ENCODE measurements at regions of chr6 and their contacts with region 1.

Region 1: DNA sequence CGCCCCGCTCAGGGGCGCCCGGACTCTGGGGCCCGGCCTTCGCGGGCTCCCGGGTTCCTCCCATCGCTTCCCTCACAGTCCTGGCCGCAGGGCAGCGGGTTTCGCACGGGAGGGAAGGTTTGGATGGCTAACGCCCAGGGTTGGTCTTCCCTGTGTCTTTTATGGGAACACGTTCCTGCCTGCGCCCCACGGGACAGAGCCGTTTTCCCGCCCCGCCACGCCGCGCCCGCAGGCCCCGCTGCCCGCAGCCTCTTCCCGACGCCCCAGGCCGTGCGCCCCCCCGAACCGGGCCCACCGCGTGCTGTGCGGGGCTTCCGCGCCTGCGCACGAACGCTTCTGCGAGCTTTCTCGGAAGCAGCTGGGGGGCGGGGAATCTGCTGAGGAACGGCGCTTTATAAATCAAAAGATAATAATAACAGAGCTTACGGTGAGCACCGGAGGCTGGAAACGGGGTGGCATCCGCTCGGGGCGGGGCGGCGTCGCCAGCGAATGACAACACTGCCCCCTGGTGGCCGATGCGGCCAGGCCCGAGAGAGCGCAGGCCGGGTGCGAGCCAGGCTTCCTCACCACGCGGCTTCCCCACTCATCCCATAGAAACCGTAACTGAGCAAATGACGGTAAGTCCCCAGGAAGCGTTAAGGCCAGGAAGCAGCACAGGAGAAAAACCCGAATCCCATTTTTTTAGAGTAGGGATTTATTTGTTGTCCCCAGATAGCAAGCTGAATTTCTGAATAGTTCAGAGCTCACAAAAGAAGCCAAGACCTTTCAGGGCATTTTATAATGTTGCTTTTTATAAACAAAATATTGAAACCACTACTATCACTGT is 116.4 kb downstream of the MYLK4 start:
- DNase-seq: peak; percentile 84
- H3K4me3 Mint-ChIP-seq: peak overlapping the region; percentile 66
- H3K27ac Mint-ChIP-seq: no peak overlapping the region
- H3K4me1 Mint-ChIP-seq: peaks cover 8% of the 10 kb centered on the region
- H3K27me3 Mint-ChIP-seq: peaks cover 36% of the 10 kb centered on the region

Region 2: GRCh38 chr6:946546-946945 is 1687.8 kb before region 1 on chr6:
- CTCF ChIA-PET with region 1: no interaction called
- POLR2A ChIA-PET with region 1: no interaction called
- DNase-seq: no peak
- H3K4me3 Mint-ChIP-seq: no peak overlapping the region
- H3K27ac Mint-ChIP-seq: no peak overlapping the region
- H3K4me1 Mint-ChIP-seq: no peaks in the 10 kb centered on the region
- H3K27me3 Mint-ChIP-seq: peaks cover 11% of the 10 kb centered on the region

Region 3: GRCh38 chr6:1596088-1596852 is 1038.1 kb before region 1 on chr6:
- CTCF ChIA-PET with region 1: interaction called, 42 read pairs
- POLR2A ChIA-PET with region 1: no interaction called
- DNase-seq: peak; percentile 66
- H3K4me3 Mint-ChIP-seq: no peak overlapping the region
- H3K27ac Mint-ChIP-seq: no peak overlapping the region
- H3K4me1 Mint-ChIP-seq: peaks cover 3% of the 10 kb centered on the region
- H3K27me3 Mint-ChIP-seq: peaks cover 62% of the 10 kb centered on the region

Region 4: DNA sequence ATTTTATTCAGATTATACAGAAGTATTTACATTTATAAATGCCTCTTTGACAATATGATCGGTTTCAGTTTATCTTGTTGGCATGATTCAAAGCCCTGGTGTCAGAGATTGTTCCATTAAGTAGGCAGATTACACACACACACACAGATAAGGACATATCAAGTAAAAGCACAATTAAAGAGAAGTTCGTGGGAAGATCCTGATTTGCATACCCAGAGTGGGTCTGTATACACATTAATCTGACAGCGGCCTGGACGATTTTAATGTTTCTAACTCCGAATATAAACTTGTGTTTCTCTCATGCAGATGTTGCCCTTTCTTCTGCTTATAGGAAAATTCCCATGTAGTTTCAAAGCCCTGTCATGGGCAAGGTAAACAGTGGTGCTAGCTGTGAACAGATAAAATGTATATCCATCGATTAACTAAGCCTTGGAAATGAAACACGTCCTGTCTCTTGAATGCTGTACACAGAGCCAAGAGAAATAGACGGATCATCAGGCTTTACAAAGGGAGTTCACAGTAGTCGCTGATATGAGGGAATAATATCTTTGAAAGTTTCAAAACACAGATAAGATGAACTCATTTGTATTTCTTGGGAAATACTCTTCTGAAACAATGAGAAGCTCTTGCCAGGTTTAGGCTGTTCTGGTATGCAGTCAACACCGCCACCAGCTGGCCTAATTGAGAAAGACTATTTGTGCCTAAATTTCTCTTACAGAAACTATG is 280.8 kb before region 1 on chr6:
- CTCF ChIA-PET with region 1: interaction called, 20 read pairs
- POLR2A ChIA-PET with region 1: no interaction called
- DNase-seq: peak; percentile 62
- H3K4me3 Mint-ChIP-seq: no peak overlapping the region
- H3K27ac Mint-ChIP-seq: no peak overlapping the region
- H3K4me1 Mint-ChIP-seq: no peaks in the 10 kb centered on the region
- H3K27me3 Mint-ChIP-seq: peaks cover 2% of the 10 kb centered on the region

Region 5: DNA sequence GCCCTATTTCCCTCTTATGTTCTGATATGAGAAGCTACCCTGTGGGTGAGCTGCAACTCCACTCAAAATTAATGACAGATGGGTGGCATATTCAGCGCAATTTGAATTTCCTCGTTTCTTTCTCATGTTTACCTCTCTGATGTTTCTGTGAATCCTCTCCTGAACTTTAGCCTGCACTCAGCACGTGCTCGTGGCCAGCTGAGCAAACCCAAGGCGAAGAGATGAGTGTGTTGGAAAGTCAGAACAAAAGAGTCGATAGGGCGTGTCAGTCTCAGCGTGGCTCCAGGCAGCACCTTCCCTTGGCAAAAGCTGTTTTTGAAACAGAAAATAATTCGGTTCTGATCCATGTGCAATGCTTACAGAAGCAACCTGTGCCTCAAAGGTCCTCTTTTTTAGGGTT is 162.9 kb before region 1 on chr6:
- CTCF ChIA-PET with region 1: interaction called, 14 read pairs
- POLR2A ChIA-PET with region 1: no interaction called
- DNase-seq: no peak
- H3K4me3 Mint-ChIP-seq: no peak overlapping the region
- H3K27ac Mint-ChIP-seq: no peak overlapping the region
- H3K4me1 Mint-ChIP-seq: no peaks in the 10 kb centered on the region
- H3K27me3 Mint-ChIP-seq: peaks cover 26% of the 10 kb centered on the region

Region 6: GRCh38 chr6:2651961-2652360 is 17.6 kb after region 1 on chr6:
- CTCF ChIA-PET with region 1: interaction called, 10 read pairs
- POLR2A ChIA-PET with region 1: no interaction called
- DNase-seq: no peak
- H3K4me3 Mint-ChIP-seq: no peak overlapping the region
- H3K27ac Mint-ChIP-seq: no peak overlapping the region
- H3K4me1 Mint-ChIP-seq: no peaks in the 10 kb centered on the region
- H3K27me3 Mint-ChIP-seq: peaks cover 35% of the 10 kb centered on the region

Region 7: DNA sequence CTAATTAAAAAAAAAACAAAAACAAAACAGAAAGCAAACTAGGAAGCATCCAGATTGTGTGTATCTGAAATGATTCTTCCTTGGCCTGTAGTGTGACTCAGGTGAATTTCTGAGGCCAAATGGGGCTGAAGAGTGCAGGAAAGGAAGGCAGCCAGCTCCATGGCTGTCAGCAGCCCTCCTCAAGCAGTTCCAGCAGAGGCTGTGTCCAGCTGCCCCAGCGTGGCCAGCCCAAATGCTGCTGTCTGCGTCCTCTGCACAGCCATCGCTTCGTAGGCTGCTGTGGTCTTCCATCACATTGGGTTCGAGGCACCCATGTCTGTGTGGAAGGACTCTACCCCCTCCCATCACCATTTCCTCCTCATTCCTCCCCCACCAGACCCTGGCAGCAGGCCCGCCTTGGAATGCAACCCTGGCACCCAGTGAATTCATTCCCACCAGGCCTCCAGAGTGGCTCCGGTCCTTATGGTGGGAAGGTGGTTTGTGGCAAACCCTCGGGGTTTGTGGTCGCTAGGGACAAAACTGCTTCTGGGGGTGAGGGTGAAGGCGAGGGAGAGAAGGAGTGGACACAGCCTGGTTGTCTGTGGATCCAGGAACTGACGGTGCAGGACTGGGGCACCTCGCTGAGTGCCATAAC is 34.8 kb after region 1 on chr6:
- CTCF ChIA-PET with region 1: no interaction called
- POLR2A ChIA-PET with region 1: no interaction called
- DNase-seq: no peak
- H3K4me3 Mint-ChIP-seq: no peak overlapping the region
- H3K27ac Mint-ChIP-seq: no peak overlapping the region
- H3K4me1 Mint-ChIP-seq: no peaks in the 10 kb centered on the region
- H3K27me3 Mint-ChIP-seq: peaks cover 8% of the 10 kb centered on the region

Measured in activated CD4-positive, alpha-beta memory T cell treated with anti-CD3 and anti-CD28 coated beads, Interleukin-2, amount 10 ng/mL, durations not matched to agents 7 days and 5 days (primary cell).